T-cell (primary cell): ENCODE measurements at regions of chr11 and their contacts with region 1.

Region 1: DNA sequence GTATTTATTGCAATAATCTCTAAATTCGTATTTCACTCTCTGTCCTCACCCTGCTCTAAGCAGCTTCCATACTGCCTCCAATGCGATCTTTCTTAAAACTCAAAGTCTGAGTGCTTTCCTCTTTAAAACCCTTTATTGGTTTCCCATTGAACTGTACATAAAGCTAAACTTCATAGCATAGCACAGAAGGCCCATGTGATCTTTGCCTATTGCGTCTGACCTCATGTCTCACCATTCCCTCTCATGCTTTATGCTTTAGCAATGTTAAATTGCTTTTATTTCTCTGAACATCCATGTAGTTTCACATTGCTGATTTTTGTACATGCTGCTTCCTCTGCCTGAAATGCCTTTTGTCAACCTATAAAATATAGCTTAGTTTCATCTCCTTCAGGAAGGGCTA is 28.4 kb downstream of the ZDHHC13 start:
- DNase-seq: no peak
- ATAC-seq: no peak
- H3K4me3 ChIP-seq: no peak overlapping the region
- H3K4me3 Mint-ChIP-seq: no peak overlapping the region
- H3K27ac ChIP-seq: no peak overlapping the region
- H3K27ac Mint-ChIP-seq: no peak overlapping the region
- H3K4me1 ChIP-seq: no peaks in the 10 kb centered on the region
- H3K4me1 Mint-ChIP-seq: peaks cover 0 to 2% (median 0%) of the 10 kb centered on the region in 3 donors
- H3K27me3 ChIP-seq: no peaks in the 10 kb centered on the region
- H3K27me3 Mint-ChIP-seq: no peaks in the 10 kb centered on the region

Region 2: GRCh38 chr11:19110280-19110679 is 35.0 kb before region 1 on chr11:
- CTCF ChIA-PET with region 1: no interaction called
- POLR2A ChIA-PET with region 1: interaction called in 1 of 2 experiments, 10 read pairs
- DNase-seq: no peak
- ATAC-seq: no peak
- H3K4me3 ChIP-seq: no peak overlapping the region
- H3K4me3 Mint-ChIP-seq: no peak overlapping the region
- H3K27ac ChIP-seq: no peak overlapping the region
- H3K27ac Mint-ChIP-seq: no peak overlapping the region
- H3K4me1 ChIP-seq: no peaks in the 10 kb centered on the region
- H3K4me1 Mint-ChIP-seq: no peaks in the 10 kb centered on the region
- H3K27me3 ChIP-seq: peaks cover 2 to 13% of the 10 kb centered on the region in 2 experiments
- H3K27me3 Mint-ChIP-seq: peaks cover 9 to 12% of the 10 kb centered on the region in 2 donors